Right cardiac atrium (tissue), 5 donors: ENCODE measurements at regions of chr6 and their contacts with region 1.

Region 1: GRCh38 chr6:149082286-149082707 is 235.2 kb upstream of the TAB2 start:
- DNase-seq: peak; percentile 80 to 93 (median 86)
- ATAC-seq: peak; percentile 34 to 71
- H3K4me3 ChIP-seq: no peak overlapping the region
- H3K27ac ChIP-seq: no peak overlapping the region
- H3K4me1 ChIP-seq: peaks cover 7% of the 10 kb centered on the region
- H3K27me3 ChIP-seq: no peaks in the 10 kb centered on the region

Region 2: GRCh38 chr6:149316798-149317655 is 234.7 kb after region 1 on chr6:
- intact Hi-C with region 1: loop called in 1 of 4 experiments (anchors 10 kb)
- DNase-seq: peak; percentile 93 to 97 (median 97)
- ATAC-seq: peak; percentile 97 to 98
- H3K4me3 ChIP-seq: peak overlapping the region; percentile 95
- H3K27ac ChIP-seq: peak overlapping the region; percentile 94
- H3K4me1 ChIP-seq: no peaks in the 10 kb centered on the region
- H3K27me3 ChIP-seq: no peaks in the 10 kb centered on the region

Region 3: DNA sequence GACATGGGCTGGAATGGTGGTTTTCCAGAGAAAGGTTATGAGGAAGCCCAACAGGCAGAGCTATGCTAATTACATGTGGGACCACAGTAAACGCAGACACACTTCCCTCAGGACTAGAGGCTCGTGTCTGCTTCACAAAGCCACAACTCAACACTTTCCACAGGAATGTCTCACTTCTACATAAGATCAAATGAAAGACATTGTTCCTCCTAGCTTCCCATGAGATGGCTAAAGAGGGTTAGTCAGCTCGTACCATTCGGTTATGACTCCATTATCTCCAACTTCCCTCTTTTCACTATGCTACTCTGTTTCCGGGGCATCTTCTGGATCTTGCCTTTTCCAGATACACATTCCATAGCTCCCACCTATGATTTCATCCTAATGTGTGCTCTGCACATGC is 431.6 kb after region 1 on chr6:
- intact Hi-C with region 1: loop called in 2 of 4 experiments (anchors 5 to 10 kb)
- DNase-seq: no peak
- ATAC-seq: peak in 1 of 2 donors; percentile 48
- H3K4me3 ChIP-seq: no peak overlapping the region
- H3K27ac ChIP-seq: no peak overlapping the region
- H3K4me1 ChIP-seq: no peaks in the 10 kb centered on the region
- H3K27me3 ChIP-seq: no peaks in the 10 kb centered on the region